ENCODE measurements at regions of chr7 and their contacts with region 1.

Region 1: DNA sequence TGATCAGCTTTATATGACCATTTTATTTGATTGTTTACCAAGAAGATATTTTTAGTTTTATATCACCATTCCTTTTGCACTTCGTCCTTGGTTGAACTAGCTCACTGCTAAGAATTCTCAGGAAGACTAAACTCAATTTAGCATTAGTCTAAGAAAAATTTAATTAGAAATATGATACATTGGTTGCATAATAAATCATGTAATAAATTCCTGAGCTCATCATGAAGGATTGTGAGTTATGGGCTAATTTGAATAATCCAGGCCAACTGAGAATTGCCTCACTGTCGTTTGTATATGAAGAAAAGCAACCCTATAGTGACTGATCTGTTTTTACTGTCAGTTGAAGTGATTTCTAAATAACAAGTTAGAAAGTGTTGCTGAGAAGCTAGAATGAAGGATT is 725.5 kb downstream of the DNAJB9 start:
- DNase-seq: no peak
- ATAC-seq: no peak
- H3K4me3 ChIP-seq: no peak overlapping the region
- H3K27ac ChIP-seq: no peak overlapping the region
- H3K4me1 ChIP-seq: no peaks in the 10 kb centered on the region
- H3K27me3 ChIP-seq: no peaks in the 10 kb centered on the region
- CTCF ChIP-seq: no peak
- POLR2A ChIP-seq: no peak

Region 2: DNA sequence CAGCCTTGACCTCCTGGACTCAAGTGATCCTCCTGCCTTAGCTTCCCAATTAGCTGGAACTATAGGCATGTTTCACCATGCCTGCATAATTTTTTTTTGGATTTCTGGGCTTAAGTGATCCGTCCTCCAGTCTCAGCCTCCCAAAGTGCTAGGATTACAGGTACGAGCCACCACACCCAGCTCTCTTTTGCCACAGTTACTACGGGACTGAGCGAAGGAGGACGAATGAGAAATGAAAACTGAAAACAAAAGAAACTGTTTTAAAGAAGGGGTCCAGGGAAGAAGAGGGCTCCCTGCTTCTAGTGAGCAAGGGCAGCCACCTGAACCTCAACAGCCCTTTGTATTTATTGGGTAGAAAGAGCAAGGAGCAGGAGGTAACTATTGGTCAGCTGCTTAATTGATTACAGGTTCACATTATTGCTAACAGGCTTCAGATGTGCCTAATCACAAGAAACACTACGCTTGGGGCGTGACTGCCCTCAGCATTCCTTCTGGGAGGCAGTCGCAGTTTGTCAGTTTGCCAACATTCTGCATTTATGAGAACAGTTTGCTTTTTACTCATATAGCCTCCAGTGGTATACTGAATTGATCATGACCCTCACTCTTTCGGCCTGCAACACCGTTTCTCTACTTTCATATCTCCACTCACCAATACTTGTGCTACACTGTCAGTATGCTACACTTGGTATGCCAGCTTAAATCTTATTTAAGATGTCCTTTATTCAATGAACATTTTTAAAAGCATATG is 48.7 kb before region 1 on chr7:
- intact Hi-C with region 1: no loop called
- DNase-seq: no peak
- ATAC-seq: no peak
- H3K4me3 ChIP-seq: no peak overlapping the region
- H3K27ac ChIP-seq: no peak overlapping the region
- H3K4me1 ChIP-seq: no peaks in the 10 kb centered on the region
- H3K27me3 ChIP-seq: no peaks in the 10 kb centered on the region
- CTCF ChIP-seq: no peak
- POLR2A ChIP-seq: no peak

Region 3: GRCh38 chr7:109354000-109354399 is 58.8 kb after region 1 on chr7:
- intact Hi-C with region 1: loop called in 1 of 10 experiments (anchors 10 kb)
- DNase-seq: no peak
- ATAC-seq: no peak
- H3K4me3 ChIP-seq: no peak overlapping the region
- H3K27ac ChIP-seq: no peak overlapping the region
- H3K4me1 ChIP-seq: no peaks in the 10 kb centered on the region
- H3K27me3 ChIP-seq: no peaks in the 10 kb centered on the region
- CTCF ChIP-seq: no peak
- POLR2A ChIP-seq: no peak

Measured in heart left ventricle (tissue), 16 donors.